Activated CD8-positive, alpha-beta T cell treated with anti-CD3 and anti-CD28 coated beads for 36 hours (primary cell): ENCODE measurements at regions of chr1 and their contacts with region 1.

Region 1: GRCh38 chr1:235018161-235018560 is 110.5 kb downstream of the TOMM20 start:
- DNase-seq: no peak
- ATAC-seq: no peak
- H3K4me3 Mint-ChIP-seq: no peak overlapping the region
- H3K27ac Mint-ChIP-seq: peak overlapping the region; percentile 68
- H3K4me1 Mint-ChIP-seq: peaks cover 70% of the 10 kb centered on the region
- H3K27me3 Mint-ChIP-seq: no peaks in the 10 kb centered on the region
- CTCF ChIP-seq: no peak

Region 2: GRCh38 chr1:234938924-234939323 is 79.2 kb before region 1 on chr1:
- CTCF ChIA-PET with region 1: no interaction called
- POLR2A ChIA-PET with region 1: no interaction called
- intact Hi-C with region 1: no loop called
- DNase-seq: no peak
- ATAC-seq: no peak
- H3K4me3 Mint-ChIP-seq: no peak overlapping the region
- H3K27ac Mint-ChIP-seq: no peak overlapping the region
- H3K4me1 Mint-ChIP-seq: peaks cover 28% of the 10 kb centered on the region
- H3K27me3 Mint-ChIP-seq: no peaks in the 10 kb centered on the region
- CTCF ChIP-seq: no peak

Region 3: DNA sequence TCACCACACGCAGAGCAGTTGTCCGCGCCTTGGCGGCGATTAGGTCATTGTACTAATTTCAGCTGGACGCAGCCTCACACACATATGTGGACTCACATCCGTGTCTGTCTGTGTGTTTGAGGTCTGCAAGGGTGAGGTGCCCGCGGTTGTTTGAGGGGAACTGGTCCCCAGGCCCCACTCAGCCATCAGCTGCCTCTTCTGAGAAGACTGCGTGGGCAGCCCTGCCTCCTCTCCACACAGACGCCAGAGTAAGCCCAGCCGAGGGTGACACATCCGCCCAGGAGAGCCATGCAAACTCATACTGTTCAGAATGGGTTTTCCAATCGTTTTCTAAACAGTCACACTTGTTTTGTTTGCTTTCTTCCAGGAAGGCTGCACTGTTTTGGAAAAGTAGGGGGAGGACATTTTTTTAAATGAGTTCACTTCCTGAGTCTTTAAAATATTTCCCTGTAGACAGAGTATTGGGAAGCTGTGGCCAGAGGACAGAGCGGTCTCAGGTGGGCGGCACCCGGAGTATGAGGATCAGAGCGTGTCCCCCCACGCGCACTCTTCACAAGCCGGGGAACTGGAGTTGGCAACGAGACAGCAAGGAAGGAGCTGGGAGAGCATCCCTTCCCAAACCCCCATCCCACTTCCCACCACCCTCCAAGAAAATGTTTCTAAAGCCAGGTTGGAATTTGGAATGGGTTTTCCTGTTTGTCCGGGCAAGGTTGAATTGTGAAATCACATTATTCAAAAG is 57.2 kb after region 1 on chr1:
- CTCF ChIA-PET with region 1: interaction called, 4 read pairs
- POLR2A ChIA-PET with region 1: interaction called, 3 read pairs
- intact Hi-C with region 1: loop called (anchors 5 kb)
- DNase-seq: peak; percentile 86
- ATAC-seq: peak; percentile 56
- H3K4me3 Mint-ChIP-seq: peak overlapping the region; percentile 51
- H3K27ac Mint-ChIP-seq: peak overlapping the region; percentile 96
- H3K4me1 Mint-ChIP-seq: peaks cover 31% of the 10 kb centered on the region
- H3K27me3 Mint-ChIP-seq: no peaks in the 10 kb centered on the region
- CTCF ChIP-seq: no peak

Region 4: DNA sequence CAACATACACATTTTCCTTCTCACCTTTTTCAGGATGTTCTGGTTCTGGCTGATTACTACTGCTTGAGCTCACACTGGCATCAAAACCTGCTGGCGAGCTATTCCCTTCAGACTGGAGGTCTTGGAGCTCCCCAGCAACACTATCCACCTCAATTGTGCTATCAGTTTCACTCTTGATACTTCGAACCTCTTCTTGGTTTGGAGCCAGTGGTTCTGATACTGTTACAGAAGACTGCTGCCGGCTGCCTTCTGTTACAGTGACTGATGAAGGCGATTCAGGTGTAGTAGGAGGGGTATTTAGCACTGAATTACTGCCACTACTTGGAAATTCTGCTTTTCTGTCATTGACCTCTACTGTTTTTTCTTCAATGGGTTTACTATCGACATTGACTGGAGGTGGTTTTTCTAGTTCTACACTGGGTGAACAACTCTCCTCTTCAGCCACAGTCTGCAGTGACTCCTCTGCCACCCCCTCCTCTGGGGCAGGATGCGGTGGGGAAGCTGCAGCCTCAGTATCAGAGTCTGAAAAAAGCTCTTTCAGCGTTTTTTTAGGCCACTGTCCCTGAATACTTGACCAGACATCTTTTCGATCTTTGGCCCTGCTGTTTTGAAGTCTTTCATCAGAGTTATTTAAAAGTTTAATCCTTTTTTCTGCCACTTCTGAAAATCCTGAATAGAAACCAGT is 163.5 kb after region 1 on chr1:
- CTCF ChIA-PET with region 1: no interaction called
- POLR2A ChIA-PET with region 1: no interaction called
- intact Hi-C with region 1: no loop called
- DNase-seq: peak; percentile 33
- ATAC-seq: peak; percentile 81
- H3K4me3 Mint-ChIP-seq: no peak overlapping the region
- H3K27ac Mint-ChIP-seq: peak overlapping the region; percentile 43
- H3K4me1 Mint-ChIP-seq: peaks cover 18% of the 10 kb centered on the region
- H3K27me3 Mint-ChIP-seq: no peaks in the 10 kb centered on the region
- CTCF ChIP-seq: no peak